Head of caudate nucleus (tissue), 42 donors: ENCODE measurements at regions of chr19 and their contacts with region 1.

Region 1: GRCh38 chr19:6279931-6280591 is at the start of gene MLLT1:
- DNase-seq: peak; percentile 92 to 100 (median 99)

Region 2: DNA sequence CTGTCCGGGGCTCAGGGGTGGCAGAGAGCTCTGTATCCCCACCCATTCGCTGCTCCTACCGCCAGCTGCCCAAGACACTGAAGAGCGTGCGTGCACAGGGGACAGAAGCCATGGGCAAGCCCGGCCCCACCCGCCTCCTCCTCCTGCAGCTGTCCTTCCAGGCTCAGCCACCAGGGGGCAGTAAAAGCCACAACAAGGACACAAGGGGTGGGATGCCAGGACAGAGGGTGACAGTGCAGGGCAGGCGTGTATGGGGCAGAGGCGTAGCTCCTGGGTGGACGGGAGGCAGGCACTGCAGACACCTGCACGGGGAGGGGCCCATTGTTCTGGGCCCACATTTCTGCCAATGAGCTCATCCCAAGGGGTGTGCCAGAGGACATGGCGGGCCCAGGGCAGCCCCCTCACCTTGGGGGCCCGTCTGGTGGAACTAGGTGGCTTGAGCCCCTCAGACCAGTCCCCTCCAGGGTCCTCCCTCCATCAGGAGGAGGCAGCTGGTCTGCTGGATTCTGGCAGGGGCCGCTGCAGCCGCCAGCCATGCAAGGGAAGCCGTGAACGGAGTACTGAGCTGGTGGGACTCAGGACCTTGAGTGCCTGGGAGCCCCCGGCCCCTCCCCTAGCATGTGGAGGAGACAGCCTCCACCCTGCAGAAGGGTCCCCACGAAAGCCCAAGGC is 61.4 kb before region 1 on chr19:
- intact Hi-C with region 1: loop called (anchors 5 kb)
- DNase-seq: peak; percentile 73 to 97 (median 90)

Region 3: GRCh38 chr19:6241680-6242377 is 38.2 kb before region 1 on chr19:
- intact Hi-C with region 1: loop called (anchors 5 kb)
- DNase-seq: peak; percentile 89 to 98 (median 95)